ENCODE measurements at regions of chr14 and their contacts with region 1.

Region 1: GRCh38 chr14:51860164-51860824 is at the start of gene GNG2:
- DNase-seq: peak; percentile 73
- ATAC-seq: peak; percentile 100
- H3K4me3 ChIP-seq: peak within 1 kb of the TSS; percentile 75
- H3K27ac ChIP-seq: peak within 1 kb of the TSS; percentile 36
- H3K4me1 ChIP-seq: peaks cover 28% of the 10 kb centered on the region
- H3K27me3 ChIP-seq: no peaks in the 10 kb centered on the region
- CTCF ChIP-seq: no peak
- total RNA-seq, gene GNG2: 6.8 and 9.3 TPM in 2 replicates

Region 2: GRCh38 chr14:51821822-51822221 is 38.5 kb before region 1 on chr14:
- CTCF ChIA-PET with region 1: no interaction called
- POLR2A ChIA-PET with region 1: interaction called, 11 read pairs
- intact Hi-C with region 1: loop called (anchors 1 kb)
- DNase-seq: peak; percentile 9
- ATAC-seq: peak; percentile 55
- H3K4me3 ChIP-seq: no peak overlapping the region
- H3K27ac ChIP-seq: no peak overlapping the region
- H3K4me1 ChIP-seq: peaks cover 25% of the 10 kb centered on the region
- H3K27me3 ChIP-seq: no peaks in the 10 kb centered on the region
- CTCF ChIP-seq: no peak

Region 3: DNA sequence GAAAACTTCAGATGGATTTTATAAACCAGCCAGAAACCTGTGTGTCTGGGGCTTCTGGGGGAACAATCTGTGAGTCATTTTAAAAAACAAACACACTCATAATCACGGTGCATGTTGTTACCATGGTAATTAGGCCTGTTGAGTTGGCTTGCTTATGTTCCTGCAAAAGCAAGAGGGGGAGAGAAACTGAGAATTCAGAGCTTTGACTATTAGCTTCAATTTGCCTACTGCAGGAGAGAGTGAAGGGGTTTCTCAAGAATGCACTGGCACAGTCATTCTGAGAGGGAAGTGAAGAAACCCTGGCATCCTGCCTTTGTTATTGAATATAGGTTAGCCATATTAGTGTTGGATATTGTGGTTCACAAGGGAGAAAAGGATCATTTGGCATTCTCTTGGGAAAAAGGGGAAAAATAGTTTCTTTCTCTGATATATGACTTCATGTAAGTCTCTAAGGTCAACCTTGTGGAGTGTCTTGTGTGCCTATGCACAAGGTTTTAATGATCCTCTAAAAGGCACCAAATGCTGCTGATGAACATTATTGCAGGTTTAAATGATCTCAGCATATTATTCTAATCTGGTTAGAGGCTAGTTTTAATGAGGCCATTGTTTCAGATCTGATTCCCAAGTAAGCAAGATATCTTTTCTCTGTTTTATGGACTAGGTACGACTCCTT is 13.1 kb after region 1 on chr14:
- CTCF ChIA-PET with region 1: no interaction called
- POLR2A ChIA-PET with region 1: interaction called, 4 read pairs
- intact Hi-C with region 1: loop called (anchors 1 kb)
- DNase-seq: peak; percentile 97
- ATAC-seq: peak; percentile 93
- H3K4me3 ChIP-seq: peak overlapping the region; percentile 20; the same call in 1 of the 2 replicates
- H3K27ac ChIP-seq: peak overlapping the region; percentile 92
- H3K4me1 ChIP-seq: peaks cover 26% of the 10 kb centered on the region
- H3K27me3 ChIP-seq: no peaks in the 10 kb centered on the region
- CTCF ChIP-seq: no peak

Region 4: GRCh38 chr14:51901475-51902024 is 41.3 kb after region 1 on chr14:
- CTCF ChIA-PET with region 1: interaction called, 3 read pairs
- POLR2A ChIA-PET with region 1: no interaction called
- intact Hi-C with region 1: loop called (anchors 1 kb)
- DNase-seq: no peak
- ATAC-seq: no peak
- H3K4me3 ChIP-seq: no peak overlapping the region
- H3K27ac ChIP-seq: no peak overlapping the region
- H3K4me1 ChIP-seq: peaks cover 5% of the 10 kb centered on the region
- H3K27me3 ChIP-seq: no peaks in the 10 kb centered on the region
- CTCF ChIP-seq: no peak

Region 5: GRCh38 chr14:51979088-51979709 is 118.9 kb after region 1 on chr14:
- CTCF ChIA-PET with region 1: interaction called, 17 read pairs
- POLR2A ChIA-PET with region 1: no interaction called
- intact Hi-C with region 1: loop called (anchors 1 kb)
- DNase-seq: peak; percentile 93
- ATAC-seq: peak; percentile 96
- H3K4me3 ChIP-seq: no peak overlapping the region
- H3K27ac ChIP-seq: no peak overlapping the region
- H3K4me1 ChIP-seq: no peaks in the 10 kb centered on the region
- H3K27me3 ChIP-seq: no peaks in the 10 kb centered on the region
- CTCF ChIP-seq: peak; percentile 97

Region 6: DNA sequence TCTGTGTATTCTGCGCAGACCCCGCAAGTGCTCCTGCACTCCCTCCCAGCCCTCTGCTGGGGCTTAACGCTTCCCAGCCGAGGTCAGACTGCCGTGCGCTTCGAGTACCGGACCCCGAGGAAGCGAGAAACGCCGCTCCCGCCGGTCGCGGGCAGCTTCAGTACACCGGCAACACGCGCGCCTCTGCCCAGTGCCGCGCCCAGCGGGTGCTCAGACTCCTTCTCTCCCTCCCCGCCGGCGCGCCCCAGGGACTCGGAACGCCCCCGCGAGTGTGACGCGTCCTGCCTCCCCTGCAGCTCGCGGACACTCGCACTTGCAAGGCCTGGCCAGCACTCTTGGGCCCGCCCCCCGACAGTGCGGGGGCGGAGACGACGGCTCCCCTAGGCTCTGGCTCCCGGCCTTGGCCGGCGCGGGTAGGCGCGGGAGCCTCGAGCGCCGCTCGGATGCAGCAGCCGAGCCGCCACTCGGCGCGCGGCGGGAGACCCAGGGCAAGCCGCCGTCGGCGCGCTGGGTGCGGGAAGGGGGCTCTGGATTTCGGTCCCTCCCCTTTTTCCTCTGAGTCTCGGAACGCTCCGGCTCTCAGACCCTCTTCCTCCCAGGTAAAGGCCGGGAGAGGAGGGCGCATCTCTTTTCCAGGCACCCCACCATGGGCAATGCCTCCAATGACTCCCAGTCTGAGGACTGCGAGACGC is 453.8 kb after region 1 on chr14 and contains the start of gene PTGER2:
- CTCF ChIA-PET with region 1: no interaction called
- POLR2A ChIA-PET with region 1: interaction called, 10 read pairs
- intact Hi-C with region 1: no loop called
- DNase-seq: peak; percentile 91
- ATAC-seq: peak; percentile 95
- H3K4me3 ChIP-seq: peak within 1 kb of the TSS; percentile 71
- H3K27ac ChIP-seq: no peak within 1 kb of the TSS
- H3K4me1 ChIP-seq: peaks cover 10% of the 10 kb centered on the region
- H3K27me3 ChIP-seq: no peaks in the 10 kb centered on the region
- CTCF ChIP-seq: no peak
- total RNA-seq, gene PTGER2: 4.6 and 4.7 TPM in 2 replicates

Measured in PC-3 (cell line).